ENCODE measurements at regions of chr2 and their contacts with region 1.

Region 1: DNA sequence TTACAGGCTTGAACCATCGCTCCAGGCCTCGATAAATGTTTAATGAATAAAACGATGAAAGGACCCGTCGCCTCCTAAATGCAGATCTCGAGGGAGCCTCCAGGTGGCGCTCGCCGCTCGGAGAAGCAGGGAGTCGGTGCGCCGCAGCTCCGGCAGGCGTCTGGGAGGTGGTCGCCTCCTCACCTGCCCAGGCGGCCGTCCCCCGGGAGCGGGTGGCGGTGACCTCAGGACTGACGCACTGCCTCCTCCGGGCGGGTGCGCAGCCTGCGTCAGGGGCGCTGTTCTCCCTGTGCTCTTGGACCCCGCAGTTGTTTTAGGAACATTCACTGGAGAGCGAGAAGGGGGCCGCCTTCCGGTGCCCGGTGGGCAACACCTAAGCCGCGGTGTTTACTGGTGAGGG is 38.6 kb upstream of the POLE4 start:
- DNase-seq: peak; percentile 76
- H3K4me3 Mint-ChIP-seq: no peak overlapping the region
- H3K27ac Mint-ChIP-seq: no peak overlapping the region
- H3K4me1 Mint-ChIP-seq: no peaks in the 10 kb centered on the region
- H3K27me3 Mint-ChIP-seq: peaks cover 14% of the 10 kb centered on the region

Region 2: DNA sequence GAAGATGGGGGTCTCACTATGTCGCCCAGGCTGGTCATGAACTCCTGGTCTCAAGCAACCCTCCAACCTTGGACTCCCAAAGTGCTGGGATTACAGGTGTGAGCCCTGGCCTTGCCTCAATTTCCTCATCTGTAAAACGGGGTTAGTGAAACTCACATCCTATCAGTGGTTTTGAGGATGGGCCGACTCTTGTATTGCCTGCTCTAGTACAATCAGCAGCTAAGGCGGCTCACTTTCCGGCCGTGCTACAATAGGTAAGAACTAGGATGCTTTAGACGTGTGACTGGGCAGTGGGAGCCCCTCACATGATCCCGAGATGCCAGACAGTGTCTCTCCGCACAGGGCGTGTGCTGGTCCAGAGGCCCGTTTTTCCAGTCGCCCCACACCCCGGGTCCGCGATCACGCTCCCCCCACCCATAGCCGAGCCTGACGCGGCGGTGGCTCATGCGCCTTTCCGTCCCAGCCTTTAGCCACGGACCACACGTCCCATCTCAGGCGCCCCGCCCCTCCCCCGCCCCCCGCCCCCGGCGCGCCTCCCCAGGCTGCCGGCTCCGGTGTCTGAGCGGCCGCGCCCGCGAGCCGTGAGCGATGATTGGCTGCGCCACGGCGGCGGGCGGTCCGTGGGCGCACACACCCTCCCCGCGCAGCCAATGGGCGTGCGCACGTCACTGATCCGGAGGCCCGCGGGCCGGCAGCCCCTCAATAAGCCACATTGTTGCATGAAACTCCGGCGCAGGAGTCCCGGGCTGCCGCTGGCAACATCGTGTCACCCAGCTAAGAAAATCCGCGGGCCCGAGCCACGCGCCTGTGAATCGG is 86.2 kb before region 1 on chr2 and contains the start of gene HK2:
- CTCF ChIA-PET with region 1: no interaction called
- POLR2A ChIA-PET with region 1: no interaction called
- intact Hi-C with region 1: no loop called
- DNase-seq: peak; percentile 88
- H3K4me3 Mint-ChIP-seq: peak within 1 kb of the TSS; percentile 87
- H3K27ac Mint-ChIP-seq: peak within 1 kb of the TSS; percentile 82
- H3K4me1 Mint-ChIP-seq: peaks cover 40% of the 10 kb centered on the region
- H3K27me3 Mint-ChIP-seq: no peaks in the 10 kb centered on the region
- total RNA-seq, gene HK2: 53.5 to 53.7 TPM

Region 3: DNA sequence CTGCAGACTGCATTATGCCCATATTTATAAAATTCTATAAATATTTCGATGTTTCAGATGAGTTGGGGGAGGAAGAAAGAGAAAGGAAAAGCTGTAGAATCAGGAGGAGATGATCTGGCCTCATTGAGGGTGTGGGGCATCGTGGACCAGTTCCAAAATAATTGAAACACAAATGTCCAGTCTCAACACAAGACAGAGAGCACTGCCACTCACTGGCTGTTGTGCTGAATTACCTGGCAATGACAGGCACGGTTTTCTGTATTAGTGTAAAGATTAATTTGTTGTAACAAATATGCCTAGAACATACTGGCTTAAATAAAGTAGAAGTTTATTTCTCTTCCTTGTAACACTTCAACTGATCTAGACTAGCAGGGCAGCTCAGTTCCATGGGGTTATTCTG is 62.8 kb after region 1 on chr2:
- CTCF ChIA-PET with region 1: interaction called, 3 read pairs
- POLR2A ChIA-PET with region 1: no interaction called
- intact Hi-C with region 1: loop called (anchors 2 kb)
- DNase-seq: no peak
- H3K4me3 Mint-ChIP-seq: no peak overlapping the region
- H3K27ac Mint-ChIP-seq: no peak overlapping the region
- H3K4me1 Mint-ChIP-seq: peaks cover 3% of the 10 kb centered on the region
- H3K27me3 Mint-ChIP-seq: no peaks in the 10 kb centered on the region

Region 4: DNA sequence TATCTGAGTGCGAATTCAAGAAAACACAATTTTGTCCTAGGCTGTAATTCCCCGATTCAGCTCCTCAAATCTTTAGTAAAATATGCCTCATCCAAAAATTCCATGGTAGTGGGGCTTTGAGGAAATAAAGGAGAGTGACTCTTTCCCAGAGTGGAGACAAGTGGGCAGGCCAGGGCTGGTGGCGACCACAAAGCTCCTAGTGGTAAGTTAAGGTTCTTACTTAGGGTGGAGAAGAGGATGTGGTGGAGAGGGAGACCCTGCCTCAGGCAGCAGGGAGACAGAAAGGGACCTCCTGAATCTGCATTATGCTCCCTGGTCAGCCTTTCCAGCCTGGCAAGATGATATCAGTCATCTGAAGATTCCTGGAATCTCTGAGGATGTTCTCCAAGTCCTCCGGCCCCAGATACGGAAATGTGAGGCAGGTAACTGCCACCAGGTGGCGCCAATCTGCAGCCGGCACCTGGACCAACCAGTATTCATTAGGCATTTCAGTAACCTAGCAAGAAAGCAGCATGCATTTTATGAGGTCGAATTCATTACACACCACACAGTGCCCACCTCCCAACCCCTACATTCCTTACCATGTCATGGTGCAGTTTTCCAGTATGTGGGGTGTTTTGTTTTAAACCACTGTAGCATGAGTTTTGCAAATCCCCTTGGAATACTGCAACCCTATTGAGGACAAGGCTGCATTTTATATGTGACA is 145.0 kb after region 1 on chr2:
- CTCF ChIA-PET with region 1: interaction called, 13 read pairs
- POLR2A ChIA-PET with region 1: no interaction called
- intact Hi-C with region 1: loop called (anchors 10 kb)
- DNase-seq: peak; percentile 66
- H3K4me3 Mint-ChIP-seq: no peak overlapping the region
- H3K27ac Mint-ChIP-seq: no peak overlapping the region
- H3K4me1 Mint-ChIP-seq: no peaks in the 10 kb centered on the region
- H3K27me3 Mint-ChIP-seq: no peaks in the 10 kb centered on the region